ENCODE measurements at regions of chr5 and their contacts with region 1.

Region 1: DNA sequence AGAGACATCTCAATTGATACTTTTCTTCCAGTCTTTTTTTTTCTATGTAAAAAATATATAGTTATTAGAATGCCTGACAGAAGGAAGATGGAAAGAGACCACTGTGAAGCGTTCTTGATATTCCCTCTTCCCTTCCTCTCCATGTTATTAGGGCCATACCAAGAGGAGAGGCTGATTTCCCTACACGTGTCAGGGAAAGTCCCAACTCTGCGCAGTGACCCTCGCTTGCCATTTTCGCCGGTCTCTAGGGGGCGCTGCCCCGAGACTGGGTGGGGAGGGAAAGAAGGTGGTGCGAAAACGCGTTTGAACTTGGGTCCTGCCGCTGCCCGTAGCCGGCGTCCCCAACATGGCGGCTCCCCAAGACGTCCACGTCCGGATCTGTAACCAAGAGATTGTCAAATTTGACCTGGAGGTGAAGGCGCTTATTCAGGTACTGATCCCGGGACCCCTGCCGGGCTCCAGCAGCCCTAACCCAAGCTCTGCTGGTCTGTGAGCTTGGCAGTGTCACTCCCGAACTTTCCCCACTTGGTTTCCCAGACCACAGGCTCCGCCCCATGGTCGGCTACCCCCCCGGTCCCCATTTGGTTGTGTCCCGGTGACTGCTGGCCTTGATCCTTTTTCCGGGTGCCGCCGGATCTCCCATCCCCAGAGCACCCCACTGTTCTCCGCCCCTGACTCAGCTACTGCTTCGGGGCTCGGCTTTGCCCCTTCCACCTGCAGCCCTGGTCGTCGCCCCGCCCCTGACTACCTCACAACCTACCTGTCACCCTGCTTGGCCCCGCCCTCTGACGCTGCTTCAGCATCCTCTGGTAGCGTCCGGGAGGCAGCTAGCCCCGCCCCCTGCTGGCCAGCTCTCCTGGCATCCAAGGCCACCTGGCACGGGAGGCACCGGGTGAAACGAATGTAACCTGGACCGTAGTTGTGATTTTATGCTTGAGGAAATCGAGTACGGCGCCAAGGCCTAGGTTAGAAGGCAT is at the start of gene BNIP1:
- DNase-seq: peak; percentile 99 to 100 (median 100)
- ATAC-seq: peak; percentile 99
- H3K4me3 ChIP-seq: peak within 1 kb of the TSS; percentile 40
- H3K4me1 ChIP-seq: no peaks in the 10 kb centered on the region
- CTCF ChIP-seq: peak; percentile 94
- total RNA-seq, gene BNIP1: 10.9 to 12.4 (median 11.4) TPM

Region 2: GRCh38 chr5:172973127-172973916 is 171.2 kb before region 1 on chr5:
- intact Hi-C with region 1: no loop called
- DNase-seq: no peak
- ATAC-seq: no peak
- H3K4me3 ChIP-seq: no peak overlapping the region
- H3K4me1 ChIP-seq: no peaks in the 10 kb centered on the region
- CTCF ChIP-seq: no peak

Region 3: GRCh38 chr5:173001229-173001841 is 143.2 kb before region 1 on chr5:
- intact Hi-C with region 1: loop called in 1 of 2 experiments (anchors 10 kb)
- DNase-seq: no peak
- ATAC-seq: no peak
- H3K4me3 ChIP-seq: no peak overlapping the region
- H3K4me1 ChIP-seq: peaks cover 18% of the 10 kb centered on the region
- CTCF ChIP-seq: no peak

Region 4: DNA sequence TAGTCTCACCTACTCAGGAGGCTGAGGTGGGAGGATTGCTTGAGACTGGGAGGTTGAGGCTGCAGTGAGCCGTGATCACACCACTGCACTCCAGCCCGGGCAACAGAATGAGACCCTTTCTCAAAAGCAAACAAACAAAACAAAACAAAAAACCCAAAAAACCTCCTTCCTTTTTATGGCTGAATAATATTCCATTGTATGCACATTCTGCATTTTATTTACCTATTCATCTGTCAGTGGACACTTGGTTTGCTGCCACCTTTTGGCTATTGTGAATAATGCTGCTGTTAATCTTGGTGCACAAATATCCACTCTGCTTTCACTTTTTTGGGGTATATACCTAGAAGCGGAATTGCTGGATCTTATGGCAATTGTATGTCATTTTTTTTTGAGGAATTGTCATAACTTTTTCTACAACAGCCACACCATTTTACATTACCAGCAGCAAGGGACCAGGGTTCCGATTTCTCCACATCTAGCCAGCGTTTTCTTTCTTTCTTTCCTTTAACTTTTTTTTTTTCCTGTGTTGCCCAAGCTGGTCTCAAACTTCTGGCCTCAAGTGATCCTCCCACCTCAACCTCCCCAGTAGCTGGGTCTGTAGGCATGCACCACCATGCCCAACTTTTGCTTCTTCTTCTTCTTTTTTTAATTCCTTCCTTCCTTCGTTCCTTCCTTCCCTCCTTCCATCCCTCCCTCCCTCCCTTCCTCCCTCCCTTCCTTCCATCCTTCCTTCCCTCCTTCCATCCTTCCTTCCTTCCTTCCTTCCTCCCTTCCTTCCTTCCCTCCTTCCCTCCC is 59.9 kb after region 1 on chr5:
- intact Hi-C with region 1: no loop called
- DNase-seq: peak in 1 of 3 donors; percentile 42
- ATAC-seq: no peak
- H3K4me3 ChIP-seq: no peak overlapping the region
- H3K4me1 ChIP-seq: no peaks in the 10 kb centered on the region
- CTCF ChIP-seq: peak; percentile 19